Left ventricle myocardium superior (tissue), 1 donor: ENCODE measurements at regions of chr2 and their contacts with region 1.

Region 1: DNA sequence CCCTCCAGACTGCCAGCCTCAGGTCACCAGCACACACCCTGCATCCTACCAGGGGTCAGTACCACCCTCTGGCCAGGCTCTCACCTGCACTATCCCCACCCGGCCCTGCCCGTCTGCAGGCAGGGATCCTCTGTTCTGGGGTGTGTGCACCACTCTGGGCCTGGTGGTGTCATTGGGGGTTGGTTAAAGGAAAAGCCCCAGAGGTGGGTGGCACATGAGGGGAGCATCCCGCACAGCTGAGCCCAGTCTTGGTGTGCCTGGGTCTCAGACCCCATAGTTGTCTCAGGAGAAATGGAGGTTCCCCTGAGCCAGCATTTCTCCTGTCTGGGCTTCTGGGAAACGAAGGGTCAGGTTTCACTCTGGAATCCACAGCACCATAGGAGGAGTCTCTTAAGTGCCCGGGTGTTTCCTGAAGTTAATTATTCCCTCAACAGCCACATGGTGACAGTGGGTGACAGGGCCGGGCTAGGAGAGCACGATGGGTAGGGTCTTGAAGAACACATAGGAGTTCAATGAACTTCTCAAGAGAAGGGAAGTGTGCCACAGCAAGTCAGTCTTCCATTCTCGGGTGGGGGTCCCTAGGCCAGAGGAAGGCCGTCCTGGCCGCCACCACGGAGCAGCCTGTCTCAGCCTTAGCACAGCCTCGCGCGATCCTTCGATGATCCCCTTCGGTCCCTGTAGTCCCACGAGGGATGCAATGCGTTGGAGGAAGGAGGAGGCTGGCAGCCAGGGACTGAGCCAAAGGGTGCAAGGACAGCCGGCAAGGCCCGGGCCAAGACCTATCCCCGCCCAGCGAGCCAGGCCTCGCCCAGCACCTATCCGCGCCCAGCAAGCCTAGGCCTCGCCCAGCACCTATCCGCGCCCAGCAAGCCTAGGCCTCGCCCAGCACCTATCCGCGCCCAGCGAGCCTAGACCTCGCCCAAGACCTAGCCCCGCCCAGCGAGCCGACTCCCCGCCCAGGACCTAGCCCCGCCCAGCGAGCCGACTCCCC is 1.1 kb upstream of the FARP2 start:
- DNase-seq: peak; percentile 94
- ATAC-seq: peak; percentile 65

Region 2: DNA sequence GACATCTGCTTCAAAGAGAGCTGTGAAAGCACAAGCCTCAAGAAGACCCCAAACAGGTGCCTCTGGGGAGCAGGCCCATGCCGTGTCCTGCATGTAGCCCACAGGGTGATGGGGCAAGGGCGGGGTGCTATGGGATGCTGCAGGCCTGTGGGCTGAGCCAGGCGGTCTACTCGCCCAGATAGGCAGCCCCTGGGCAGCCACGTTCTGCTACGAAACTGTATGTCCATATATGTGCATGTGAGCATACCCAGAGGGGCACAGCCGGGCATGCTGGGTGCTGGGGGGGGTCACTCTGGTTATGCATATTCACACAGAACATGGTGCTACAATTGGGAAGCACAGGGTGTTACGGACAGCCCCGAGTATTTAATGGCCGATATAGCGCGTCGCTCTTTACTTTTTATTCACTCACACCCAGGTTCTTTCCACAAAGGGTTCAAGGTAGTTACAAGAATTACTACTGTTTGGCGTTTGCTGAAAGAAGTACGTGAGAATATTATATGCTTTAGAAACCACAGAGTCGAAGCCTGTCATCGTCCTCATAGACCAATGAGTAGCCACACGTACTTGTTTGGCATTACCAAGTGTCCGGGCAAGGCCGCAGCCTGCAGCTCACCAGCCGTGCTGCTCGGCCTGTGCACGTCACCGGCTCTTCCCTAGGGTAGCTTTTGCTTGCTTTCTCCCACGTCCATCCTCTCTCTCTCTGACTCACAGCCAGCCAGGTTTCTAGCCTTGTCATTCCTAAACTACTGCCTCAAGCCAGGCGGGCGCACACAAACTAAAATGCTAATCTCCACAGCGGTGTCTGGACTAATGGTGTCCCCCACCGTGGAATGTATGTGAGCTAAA is 267.3 kb before region 1 on chr2:
- intact Hi-C with region 1: no loop called
- DNase-seq: no peak
- ATAC-seq: no peak

Region 3: GRCh38 chr2:241315093-241315878 is 39.7 kb before region 1 on chr2 and contains the start of gene HDLBP:
- intact Hi-C with region 1: loop called (anchors 5 kb)
- DNase-seq: peak; percentile 100
- ATAC-seq: peak; percentile 91
- total RNA-seq, gene HDLBP: 420 TPM

Region 4: GRCh38 chr2:241421330-241421729 is 66.4 kb after region 1 on chr2:
- intact Hi-C with region 1: no loop called
- DNase-seq: no peak
- ATAC-seq: no peak

Region 5: DNA sequence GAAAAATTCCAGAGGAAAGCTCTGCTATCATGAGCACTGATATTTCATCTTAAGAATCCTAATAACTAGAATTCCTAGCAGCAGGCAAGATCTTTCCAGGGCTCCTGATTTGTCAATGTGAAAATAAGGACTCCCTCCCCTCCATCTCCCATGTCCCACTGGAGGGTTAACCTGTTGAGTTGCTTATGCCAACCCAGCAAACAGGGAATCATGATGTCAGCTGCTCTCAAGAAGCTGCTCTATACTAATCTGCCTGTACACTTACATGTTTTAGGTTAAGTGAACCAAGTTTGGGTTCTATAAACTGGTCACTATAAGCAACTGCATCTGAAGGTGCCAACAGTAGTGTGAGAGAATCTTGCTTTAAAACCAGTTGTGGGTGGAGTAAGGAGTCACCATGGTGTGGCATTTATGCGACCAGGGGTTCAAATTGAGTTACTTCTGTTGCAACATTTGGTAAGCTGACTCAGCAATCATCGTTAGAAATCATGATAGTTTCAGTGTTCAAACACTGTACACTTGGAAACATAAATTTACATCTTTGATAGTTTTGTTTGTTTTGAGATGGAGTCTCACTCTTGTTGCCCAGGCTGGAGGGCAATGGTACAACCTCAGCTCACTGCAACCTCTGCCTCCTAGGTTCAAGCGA is 100.0 kb after region 1 on chr2:
- intact Hi-C with region 1: no loop called
- DNase-seq: no peak
- ATAC-seq: no peak